ENCODE measurements at regions of chr10 and their contacts with region 1.

Region 1: DNA sequence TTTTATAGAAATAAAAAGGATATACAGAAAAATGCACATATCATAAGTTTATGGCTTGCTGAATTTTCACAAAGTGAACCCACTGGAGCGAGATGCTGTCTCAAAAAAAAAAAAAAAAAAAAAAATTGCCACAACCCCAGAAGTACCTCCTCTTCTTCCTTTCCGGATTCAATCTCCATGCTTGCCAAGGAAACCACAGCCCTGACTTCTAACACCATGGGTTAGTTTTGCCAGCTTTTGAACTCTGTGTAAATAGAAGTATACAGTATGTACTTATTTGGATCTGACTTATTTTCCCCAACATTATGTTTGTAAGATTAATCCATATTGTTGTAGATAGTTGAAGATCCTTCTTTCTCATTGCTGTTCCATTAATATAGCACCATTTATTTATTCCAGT is 40.0 kb downstream of the FANK1 start:
- DNase-seq: peak; percentile 9
- H3K4me3 ChIP-seq: no peak overlapping the region
- CTCF ChIP-seq: no peak

Region 2: GRCh38 chr10:125871338-125871737 is 65.0 kb before region 1 on chr10:
- in situ Hi-C with region 1: loop called (anchors 5 kb)
- DNase-seq: no peak
- H3K4me3 ChIP-seq: no peak overlapping the region
- CTCF ChIP-seq: no peak

Region 3: DNA sequence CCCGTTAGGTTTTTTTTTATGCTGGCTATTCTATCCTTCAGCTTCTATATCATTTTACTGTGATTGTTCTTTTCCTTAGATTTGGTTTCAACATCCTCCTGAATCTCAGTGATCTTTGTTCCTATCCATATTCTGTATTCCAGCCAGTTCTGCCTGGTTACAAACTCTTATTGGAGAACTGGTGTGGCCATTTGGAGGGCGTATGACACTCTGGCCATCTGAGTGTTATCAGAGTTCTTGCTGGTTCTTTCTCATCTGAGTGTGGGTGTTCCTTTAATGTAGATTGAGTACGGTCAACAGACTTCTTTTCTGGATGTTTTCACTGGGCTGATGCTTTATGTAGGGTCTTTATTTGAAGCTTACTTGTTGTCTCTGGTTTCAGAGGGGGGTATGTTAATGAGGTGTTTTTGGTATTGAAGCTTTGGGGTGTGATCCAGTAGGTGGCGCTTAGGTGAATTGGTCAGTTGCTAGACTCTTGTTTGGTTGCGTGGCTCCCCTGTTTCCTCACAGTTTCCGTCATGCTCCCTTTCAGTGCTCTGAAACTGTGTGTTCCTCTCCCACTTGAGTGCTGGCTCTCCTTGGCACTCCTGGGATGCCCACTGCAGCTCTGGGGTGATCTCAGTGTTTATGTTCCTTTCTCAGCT is 40.8 kb after region 1 on chr10:
- in situ Hi-C with region 1: loop called (anchors 5 kb)
- DNase-seq: no peak
- H3K4me3 ChIP-seq: no peak overlapping the region
- CTCF ChIP-seq: peak; percentile 14

Region 4: GRCh38 chr10:125990974-125991791 is 54.9 kb after region 1 on chr10:
- in situ Hi-C with region 1: no loop called
- DNase-seq: no peak
- H3K4me3 ChIP-seq: no peak overlapping the region
- CTCF ChIP-seq: no peak